Right lobe of liver (tissue), 6 donors: ENCODE measurements at regions of chr18 and their contacts with region 1.

Region 1: DNA sequence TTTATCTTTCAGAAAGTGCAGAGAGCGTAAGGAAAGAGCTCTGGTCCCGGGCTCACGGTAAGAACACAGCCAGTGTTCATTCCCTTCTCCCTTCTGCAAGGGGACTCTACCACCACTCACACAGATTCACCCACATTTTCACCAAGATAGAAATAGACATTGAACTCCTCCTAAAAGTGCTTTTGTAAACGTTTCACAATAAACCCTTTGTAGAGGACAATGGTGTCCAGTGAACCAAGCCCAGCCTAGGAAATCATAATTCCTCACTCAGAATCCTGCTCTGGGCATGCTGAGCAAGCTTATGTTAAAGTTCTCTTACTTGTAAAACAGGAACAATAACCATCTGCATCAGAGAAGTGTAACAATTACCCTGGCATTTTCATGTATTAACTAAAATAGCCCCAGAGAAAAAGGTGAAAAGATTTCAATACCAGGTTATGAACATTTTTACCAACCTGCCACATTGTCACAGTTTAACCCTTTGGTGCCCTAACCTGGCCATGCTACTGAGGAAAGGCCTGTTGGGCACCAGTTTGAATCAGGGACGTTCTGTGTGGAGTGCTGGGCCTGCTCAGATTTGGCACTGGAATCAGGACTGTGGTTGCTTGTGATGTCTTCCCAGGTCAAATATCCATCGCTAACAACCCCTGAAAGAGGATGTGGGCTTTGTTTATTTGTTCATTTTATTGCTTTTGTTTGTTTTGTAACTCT is 22.5 kb upstream of the NDUFV2 start:
- DNase-seq: no peak
- ATAC-seq: peak; percentile 15 to 43 (median 28)
- H3K4me3 ChIP-seq: no peak overlapping the region
- H3K27ac ChIP-seq: no peak overlapping the region
- H3K4me1 ChIP-seq: no peaks in the 10 kb centered on the region
- H3K27me3 ChIP-seq: no peaks in the 10 kb centered on the region
- CTCF ChIP-seq: no peak
- POLR2A ChIP-seq: no peak

Region 2: DNA sequence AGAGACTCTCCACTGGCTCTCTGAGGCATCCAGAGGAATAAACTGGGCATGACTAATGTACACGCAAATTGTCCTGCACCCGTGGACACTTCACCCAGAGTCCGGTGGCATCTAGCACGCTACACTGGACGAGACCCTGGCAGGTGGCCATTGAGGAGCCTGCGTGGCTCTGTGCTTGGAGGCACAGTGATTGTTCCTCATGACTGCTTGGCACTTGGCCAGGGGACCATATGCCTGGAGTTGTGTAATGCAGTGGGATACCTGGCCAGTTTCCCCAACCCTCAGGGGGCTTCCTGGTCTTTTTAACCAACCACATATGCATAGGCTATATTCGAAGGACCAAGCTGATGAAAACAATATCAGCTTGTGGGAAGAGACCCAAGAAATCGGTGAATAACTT is 308.0 kb before region 1 on chr18:
- intact Hi-C with region 1: no loop called
- DNase-seq: no peak
- ATAC-seq: no peak
- H3K4me3 ChIP-seq: no peak overlapping the region
- H3K27ac ChIP-seq: no peak overlapping the region
- H3K4me1 ChIP-seq: no peaks in the 10 kb centered on the region
- H3K27me3 ChIP-seq: no peaks in the 10 kb centered on the region
- CTCF ChIP-seq: no peak
- POLR2A ChIP-seq: no peak

Region 3: DNA sequence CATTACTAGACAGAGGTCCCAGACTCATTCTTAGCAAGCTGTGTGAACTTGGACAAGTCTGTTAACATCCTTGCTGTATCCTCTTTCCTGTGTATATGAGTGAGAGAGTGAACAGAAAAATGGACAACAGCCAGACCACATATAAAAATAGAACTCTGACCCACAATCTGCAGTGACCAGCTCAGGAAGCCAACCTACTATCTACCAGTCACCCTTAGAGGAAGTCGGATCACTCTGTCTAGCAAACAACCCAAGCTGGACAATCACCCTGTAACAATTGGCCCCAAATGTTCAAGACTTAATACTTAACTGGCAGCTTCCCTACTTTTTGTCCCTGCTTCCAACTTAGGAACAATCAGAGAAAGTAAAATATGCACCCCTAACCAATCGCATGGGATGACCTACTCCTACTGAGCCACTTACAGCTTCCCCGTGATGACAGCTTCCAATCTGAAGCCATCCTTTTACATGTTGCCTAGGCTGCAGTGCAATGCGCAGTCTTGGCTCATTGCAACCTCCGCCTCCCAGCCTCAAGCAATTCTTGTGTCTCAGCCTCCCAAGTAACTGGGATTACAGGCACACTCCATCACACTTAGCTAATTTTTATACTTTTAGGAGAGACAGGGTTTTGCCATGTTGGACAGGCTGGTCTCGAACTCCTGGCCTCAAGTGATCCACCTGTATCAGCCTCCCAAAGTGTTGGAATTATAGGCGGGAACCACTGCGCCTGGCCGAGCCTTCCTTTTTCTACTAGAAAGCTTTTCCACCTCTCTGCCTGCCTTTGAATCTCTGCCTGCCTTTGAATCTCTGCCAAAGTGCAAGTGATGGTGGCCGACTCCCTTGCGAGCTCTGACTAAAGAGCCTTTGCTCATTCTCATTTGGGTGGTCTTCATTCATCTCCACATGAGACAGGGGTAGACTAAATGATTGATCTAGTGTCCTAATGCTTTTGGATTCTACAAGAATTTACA is 135.8 kb before region 1 on chr18:
- intact Hi-C with region 1: no loop called
- DNase-seq: no peak
- ATAC-seq: peak in 2 of 4 donors; percentile 13 to 48
- H3K4me3 ChIP-seq: no peak overlapping the region
- H3K27ac ChIP-seq: no peak overlapping the region
- H3K4me1 ChIP-seq: no peaks in the 10 kb centered on the region
- H3K27me3 ChIP-seq: no peaks in the 10 kb centered on the region
- CTCF ChIP-seq: no peak
- POLR2A ChIP-seq: no peak

Region 4: GRCh38 chr18:9008709-9009635 is 71.0 kb before region 1 on chr18:
- intact Hi-C with region 1: no loop called
- DNase-seq: no peak
- ATAC-seq: no peak
- H3K4me3 ChIP-seq: no peak overlapping the region
- H3K27ac ChIP-seq: no peak overlapping the region
- H3K4me1 ChIP-seq: no peaks in the 10 kb centered on the region
- H3K27me3 ChIP-seq: no peaks in the 10 kb centered on the region
- CTCF ChIP-seq: no peak
- POLR2A ChIP-seq: no peak

Region 5: DNA sequence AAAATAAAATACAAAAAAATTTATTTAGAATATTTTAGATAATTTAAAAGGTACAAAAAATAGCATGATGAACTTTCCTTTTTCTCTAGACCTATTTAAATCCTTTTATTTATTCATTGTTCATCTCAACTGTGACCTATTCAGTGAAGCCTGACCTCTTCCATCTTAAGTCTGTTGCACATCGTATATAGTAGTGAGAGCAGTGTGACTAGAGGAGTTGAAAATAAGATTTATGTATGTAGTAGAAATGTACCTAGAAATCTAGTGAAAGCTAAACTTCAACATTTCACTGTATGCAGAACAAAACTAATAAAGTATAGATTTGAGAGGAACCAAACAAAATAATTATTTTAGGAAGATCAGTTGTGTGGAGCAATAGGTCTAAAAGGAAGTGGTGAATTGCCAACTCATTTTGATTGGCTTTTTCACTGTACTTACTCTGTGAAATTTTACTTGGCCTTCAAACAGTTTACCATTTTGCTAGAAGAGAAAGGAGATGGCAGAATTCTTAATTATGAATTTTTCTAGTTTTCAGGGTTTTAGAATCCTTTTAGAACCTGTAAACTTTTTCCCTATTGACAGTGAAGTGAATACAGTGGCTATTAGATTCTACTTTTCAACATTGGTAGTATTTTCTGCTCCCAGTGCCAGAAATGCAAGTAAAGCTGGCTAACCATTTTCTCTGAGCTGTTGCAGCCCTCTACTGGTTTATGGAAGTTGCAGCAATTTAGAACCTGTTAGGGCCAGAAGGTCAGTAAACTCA is 67.6 kb after region 1 on chr18:
- intact Hi-C with region 1: loop called in 1 of 2 experiments (anchors 10 kb)
- DNase-seq: peak in 1 of 3 donors; percentile 55
- ATAC-seq: peak; percentile 91 to 96 (median 94)
- H3K4me3 ChIP-seq: no peak overlapping the region
- H3K27ac ChIP-seq: peak overlapping the region; percentile 12 to 66 (median 57)
- H3K4me1 ChIP-seq: peaks cover 0 to 50% (median 25%) of the 10 kb centered on the region in 4 donors
- H3K27me3 ChIP-seq: no peaks in the 10 kb centered on the region
- CTCF ChIP-seq: peak; percentile 70 to 84 (median 78)
- POLR2A ChIP-seq: no peak